Activated CD4-positive, alpha-beta T cell treated with anti-CD3 and anti-CD28 coated beads for 36 hours (primary cell): ENCODE measurements at regions of chrX and their contacts with region 1.

Region 1: DNA sequence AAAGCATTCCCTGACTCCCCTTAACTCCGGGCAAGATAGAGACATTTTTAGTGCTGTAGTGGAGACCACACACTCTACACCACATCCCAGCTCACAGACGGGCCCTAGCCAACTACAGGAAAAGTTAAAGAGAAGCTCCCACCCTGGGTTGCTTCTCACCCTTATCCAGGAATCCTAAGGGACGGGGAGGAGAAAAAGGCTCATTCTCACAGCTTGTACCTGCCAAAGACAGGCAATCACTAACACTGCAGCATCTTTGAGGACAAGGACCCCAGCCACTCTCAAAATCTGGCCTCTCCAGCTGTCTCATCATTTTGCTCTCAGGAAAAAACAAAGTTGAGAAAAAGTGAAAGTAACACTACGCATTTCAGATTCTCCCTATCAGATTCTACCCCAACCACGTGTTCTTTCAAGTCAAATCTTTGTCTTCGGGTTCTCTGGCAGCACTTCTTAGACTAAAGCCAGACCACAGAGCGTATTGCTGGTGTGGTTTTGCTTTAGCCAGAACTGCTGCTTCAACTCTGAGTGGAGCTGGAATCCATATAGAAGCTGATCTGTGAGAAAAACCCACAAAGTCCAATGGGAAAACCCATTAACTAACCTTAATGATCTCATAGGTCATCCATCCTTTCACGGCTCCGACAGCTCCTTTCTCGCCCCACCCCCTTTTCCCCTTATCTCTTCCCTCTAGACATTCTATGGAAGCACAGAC is 605.9 kb upstream of the DIPK2B start:
- DNase-seq: peak; percentile 65
- ATAC-seq: peak; percentile 52
- H3K4me3 Mint-ChIP-seq: peak overlapping the region; percentile 68
- H3K27ac Mint-ChIP-seq: peak overlapping the region; percentile 88
- H3K4me1 Mint-ChIP-seq: peaks cover 85% of the 10 kb centered on the region
- H3K27me3 Mint-ChIP-seq: no peaks in the 10 kb centered on the region

Region 2: DNA sequence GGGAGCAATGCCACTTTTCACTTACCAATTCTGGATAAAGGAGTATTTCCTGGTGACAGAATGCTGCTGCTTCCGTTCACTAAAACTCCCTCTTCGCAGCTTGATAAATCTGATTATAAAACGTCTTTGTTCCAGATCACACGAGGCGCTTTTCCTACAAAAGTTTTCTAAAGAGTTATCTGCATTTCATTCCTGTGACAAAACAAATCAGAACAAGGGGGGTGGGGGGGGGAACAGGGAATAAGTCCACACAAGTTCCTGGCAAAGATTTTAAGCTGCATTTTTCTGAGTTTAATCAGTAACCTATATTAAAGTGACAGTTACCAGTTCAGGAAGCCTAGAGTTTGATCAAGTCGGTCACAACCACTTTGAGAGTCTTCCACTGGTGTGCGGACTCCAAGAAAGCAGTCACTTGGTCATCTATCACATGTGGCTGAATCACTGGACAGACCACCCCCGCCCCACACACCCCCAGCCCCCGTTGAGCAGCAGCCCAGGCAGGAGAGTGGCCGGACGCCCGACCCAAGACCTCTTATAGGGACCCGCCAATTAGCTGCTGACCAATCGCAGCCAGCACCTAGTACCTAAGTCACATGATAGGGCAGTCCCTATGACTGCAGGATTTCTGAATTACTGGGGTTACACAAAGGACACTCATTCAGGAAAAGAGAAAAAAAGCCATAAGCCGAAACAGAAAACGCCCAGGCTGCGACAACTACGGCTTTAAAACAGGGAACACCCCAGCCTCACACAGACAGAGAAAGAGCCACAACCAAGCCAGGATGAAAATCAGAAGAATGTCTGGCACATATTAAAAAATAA is 36.6 kb before region 1 on chrX:
- CTCF ChIA-PET with region 1: interaction called, 25 read pairs
- POLR2A ChIA-PET with region 1: interaction called, 13 read pairs
- intact Hi-C with region 1: loop called (anchors 1 to 2 kb)
- DNase-seq: peak; percentile 60
- ATAC-seq: peak; percentile 63
- H3K4me3 Mint-ChIP-seq: peak overlapping the region; percentile 77
- H3K27ac Mint-ChIP-seq: peak overlapping the region; percentile 98
- H3K4me1 Mint-ChIP-seq: peaks cover 53% of the 10 kb centered on the region
- H3K27me3 Mint-ChIP-seq: no peaks in the 10 kb centered on the region

Region 3: DNA sequence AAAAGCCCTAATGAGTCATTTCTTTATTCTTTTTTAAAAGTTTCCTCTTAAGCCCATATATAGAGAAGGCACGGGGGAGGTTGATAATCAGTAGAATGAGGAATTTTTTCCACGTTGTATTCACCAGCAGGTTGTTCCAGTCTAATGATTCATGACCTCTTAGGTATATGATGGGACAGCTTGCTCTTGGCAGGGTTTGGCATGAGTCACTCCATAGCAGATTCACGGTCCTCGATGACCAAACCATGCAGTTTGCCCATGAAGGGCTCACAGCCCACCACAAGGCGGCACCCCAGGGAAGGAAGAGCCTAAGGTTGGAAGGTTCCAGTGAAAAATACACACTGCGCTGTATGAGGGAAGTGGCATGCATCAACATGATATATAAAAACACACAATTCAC is 17.9 kb after region 1 on chrX:
- CTCF ChIA-PET with region 1: interaction called, 3 read pairs
- POLR2A ChIA-PET with region 1: interaction called, 4 read pairs
- intact Hi-C with region 1: loop called (anchors 1 to 2 kb)
- DNase-seq: peak; percentile 78
- ATAC-seq: peak; percentile 96
- H3K4me3 Mint-ChIP-seq: no peak overlapping the region
- H3K27ac Mint-ChIP-seq: peak overlapping the region; percentile 93
- H3K4me1 Mint-ChIP-seq: peaks cover 57% of the 10 kb centered on the region
- H3K27me3 Mint-ChIP-seq: no peaks in the 10 kb centered on the region

Region 4: GRCh38 chrX:46317163-46317562 is 510.6 kb after region 1 on chrX:
- CTCF ChIA-PET with region 1: no interaction called
- POLR2A ChIA-PET with region 1: no interaction called
- intact Hi-C with region 1: no loop called
- DNase-seq: no peak
- ATAC-seq: no peak
- H3K4me3 Mint-ChIP-seq: no peak overlapping the region
- H3K27ac Mint-ChIP-seq: no peak overlapping the region
- H3K4me1 Mint-ChIP-seq: peaks cover 43% of the 10 kb centered on the region
- H3K27me3 Mint-ChIP-seq: no peaks in the 10 kb centered on the region